ENCODE measurements at regions of chr17 and their contacts with region 1.

Region 1: DNA sequence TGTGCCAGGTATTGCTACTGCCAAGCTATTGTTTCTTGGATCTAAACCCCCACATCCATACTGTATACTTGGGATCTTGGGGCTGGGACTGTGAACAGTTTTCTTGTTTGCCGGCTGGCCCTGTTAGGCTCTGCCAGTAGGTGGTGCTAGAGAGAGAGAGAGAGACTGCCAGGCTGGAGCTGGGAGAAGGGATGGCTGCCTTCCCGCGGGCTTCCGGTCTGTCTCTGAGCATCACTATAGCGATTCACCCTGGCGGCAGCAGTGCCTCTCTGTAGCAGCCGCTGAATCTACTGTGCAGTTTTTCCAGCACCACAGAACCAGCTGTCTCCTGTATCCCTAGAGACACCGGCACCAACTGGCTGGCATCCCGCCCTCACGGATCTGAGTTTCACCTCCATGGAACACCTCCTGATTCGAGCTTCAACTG is 201.2 kb downstream of the UTP18 start:
- DNase-seq: peak; percentile 65
- ATAC-seq: peak; percentile 99
- H3K4me3 ChIP-seq: no peak overlapping the region
- H3K27ac ChIP-seq: no peak overlapping the region
- H3K4me1 ChIP-seq: no peaks in the 10 kb centered on the region
- H3K27me3 ChIP-seq: peaks cover 1 to 7% of the 10 kb centered on the region in 2 experiments; a peak in 1 of 5 replicates
- CTCF ChIP-seq: peak; percentile 86
- EP300 ChIP-seq: no peak
- POLR2A ChIP-seq: no peak
- RAD21 ChIP-seq: peak; percentile 55; the same call in 1 of the 2 replicates

Region 2: DNA sequence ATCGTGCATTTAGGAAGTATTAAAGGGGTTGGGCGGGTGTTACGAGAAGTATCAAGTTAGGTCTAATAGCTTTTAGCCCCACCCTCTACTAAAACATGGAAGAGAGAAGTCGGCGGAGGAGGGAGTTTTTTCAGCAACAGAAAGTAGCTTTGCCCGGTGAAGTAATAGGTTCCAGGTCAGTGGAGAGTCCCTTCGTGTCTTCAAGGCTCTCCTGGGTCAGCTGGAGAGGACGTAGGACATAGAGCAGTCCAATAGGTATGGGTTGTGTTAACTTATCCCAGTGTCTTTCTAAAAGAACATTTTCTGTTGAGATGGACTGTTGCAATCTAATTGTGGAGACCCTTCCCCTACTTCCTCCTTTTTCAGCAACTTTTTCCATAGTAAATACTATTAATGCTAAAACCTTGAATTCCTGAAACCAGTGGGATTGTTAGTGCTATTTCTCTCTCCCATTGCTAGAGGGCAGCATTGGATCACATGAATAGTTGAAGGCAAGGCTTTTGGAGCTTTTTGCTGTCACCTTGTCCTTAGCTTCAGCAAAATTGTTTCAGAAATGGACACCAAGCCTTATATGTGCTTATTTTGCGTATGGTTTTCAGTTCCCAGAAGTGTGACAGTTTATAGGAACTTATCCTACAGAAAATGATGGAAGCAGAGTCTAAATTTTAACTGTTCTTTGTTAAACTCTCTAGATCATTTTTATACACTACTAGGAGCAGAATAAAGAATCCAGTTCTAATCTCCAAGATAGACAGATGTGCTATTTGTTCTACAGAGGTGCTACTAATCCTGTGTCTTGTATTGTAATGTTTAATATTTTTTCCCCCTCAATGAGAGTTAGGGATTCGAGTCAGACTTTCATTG is 162.9 kb before region 1 on chr17:
- CTCF ChIA-PET with region 1: no interaction called
- POLR2A ChIA-PET with region 1: no interaction called
- in situ Hi-C with region 1: no loop called
- intact Hi-C with region 1: loop called (anchors 2 kb)
- DNase-seq: peak; percentile 76
- ATAC-seq: peak; percentile 81
- H3K4me3 ChIP-seq: no peak overlapping the region
- H3K27ac ChIP-seq: no peak overlapping the region
- H3K4me1 ChIP-seq: no peaks in the 10 kb centered on the region
- H3K27me3 ChIP-seq: no peaks in the 10 kb centered on the region
- CTCF ChIP-seq: peak; percentile 84
- EP300 ChIP-seq: no peak
- POLR2A ChIP-seq: no peak
- RAD21 ChIP-seq: peak; percentile 52; the same call in 1 of the 2 replicates